ENCODE measurements at regions of chr10 and their contacts with region 1.

Region 1: DNA sequence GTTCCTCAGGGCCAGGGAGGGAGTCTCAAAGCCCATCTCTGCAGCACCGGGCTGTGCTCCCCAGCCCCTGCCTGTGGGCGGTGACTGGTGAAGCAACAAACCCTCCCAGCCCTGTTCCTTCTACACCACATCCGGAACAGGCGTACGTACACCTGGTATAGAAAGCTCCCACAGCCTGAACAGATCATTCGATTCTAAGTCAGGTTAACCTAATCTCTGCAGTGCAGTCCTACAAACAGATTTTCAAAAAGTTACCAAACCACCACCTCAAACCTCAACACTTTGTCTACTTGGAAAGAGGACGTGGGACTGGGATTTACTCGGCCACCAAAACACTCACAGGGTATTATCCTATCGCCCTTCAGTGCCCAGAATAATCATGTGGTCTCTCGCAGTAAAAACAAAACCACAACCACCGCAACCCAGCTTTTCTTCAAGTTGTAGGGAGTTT is 238.4 kb downstream of the DIP2C start:
- DNase-seq: peak; percentile 46 to 90 (median 65)
- ATAC-seq: peak; percentile 98
- H3K4me3 ChIP-seq: peak overlapping the region; percentile 22
- H3K4me3 Mint-ChIP-seq: peak overlapping the region; percentile 84
- H3K27ac ChIP-seq: peak overlapping the region in 1 of 2 donors; percentile 2
- H3K27ac Mint-ChIP-seq: peak overlapping the region; percentile 93
- H3K4me1 ChIP-seq: peaks cover 67% of the 10 kb centered on the region
- H3K4me1 Mint-ChIP-seq: peaks cover 65% of the 10 kb centered on the region
- H3K27me3 ChIP-seq: no peaks in the 10 kb centered on the region
- H3K27me3 Mint-ChIP-seq: no peaks in the 10 kb centered on the region
- CTCF ChIP-seq: no peak

Region 2: GRCh38 chr10:436911-437665 is 14.0 kb before region 1 on chr10:
- CTCF ChIA-PET with region 1: no interaction called
- POLR2A ChIA-PET with region 1: interaction called, 16 read pairs
- intact Hi-C with region 1: loop called in 1 of 2 experiments (anchors 2 kb)
- DNase-seq: peak in 4 of 14 experiments; percentile 17 to 60 (median 31)
- ATAC-seq: peak; percentile 34
- H3K4me3 ChIP-seq: no peak overlapping the region
- H3K4me3 Mint-ChIP-seq: peak overlapping the region; percentile 2
- H3K27ac ChIP-seq: no peak overlapping the region
- H3K27ac Mint-ChIP-seq: peak overlapping the region; percentile 37
- H3K4me1 ChIP-seq: peaks cover 39% of the 10 kb centered on the region
- H3K4me1 Mint-ChIP-seq: peaks cover 46% of the 10 kb centered on the region
- H3K27me3 ChIP-seq: no peaks in the 10 kb centered on the region
- H3K27me3 Mint-ChIP-seq: no peaks in the 10 kb centered on the region
- CTCF ChIP-seq: no peak

Region 3: DNA sequence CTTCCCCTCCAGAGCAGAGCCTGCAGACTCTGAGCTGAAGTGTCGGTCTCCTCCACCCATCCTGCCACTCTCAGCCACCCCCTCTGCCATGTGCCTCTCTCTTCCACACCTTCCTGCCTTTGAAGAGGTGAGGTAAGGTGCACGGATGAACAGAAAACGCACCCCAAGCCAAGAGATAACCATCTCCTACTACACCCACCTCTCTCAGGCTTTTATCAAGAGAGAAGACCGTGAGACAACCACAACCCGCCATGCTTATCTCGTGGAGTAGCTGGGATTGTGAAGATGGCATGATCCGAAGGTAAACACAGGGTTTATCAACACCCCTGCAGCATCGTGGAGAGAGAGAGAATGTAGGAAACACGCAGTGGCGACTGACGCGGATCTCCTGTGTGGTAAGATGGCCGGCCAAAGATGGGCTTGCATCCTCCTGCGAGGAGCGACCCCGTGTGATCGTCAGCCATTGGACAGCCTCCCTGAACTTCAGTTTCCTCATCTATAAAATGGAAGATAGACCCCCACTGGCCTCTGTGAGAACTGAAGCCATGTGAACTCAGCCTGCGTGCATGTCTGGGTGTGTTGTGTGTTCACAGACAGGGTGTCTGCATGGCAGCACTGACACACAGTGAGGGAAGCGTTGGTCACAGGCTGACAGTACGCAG is 19.4 kb after region 1 on chr10:
- CTCF ChIA-PET with region 1: no interaction called
- POLR2A ChIA-PET with region 1: interaction called, 33 read pairs
- intact Hi-C with region 1: loop called in 1 of 2 experiments (anchors 1 kb)
- DNase-seq: peak; percentile 24 to 84 (median 44)
- ATAC-seq: peak; percentile 79
- H3K4me3 ChIP-seq: peak overlapping the region; percentile 35
- H3K4me3 Mint-ChIP-seq: peak overlapping the region; percentile 72
- H3K27ac ChIP-seq: peak overlapping the region; percentile 26 to 40
- H3K27ac Mint-ChIP-seq: peak overlapping the region; percentile 92
- H3K4me1 ChIP-seq: peaks cover 37% of the 10 kb centered on the region
- H3K4me1 Mint-ChIP-seq: peaks cover 25% of the 10 kb centered on the region
- H3K27me3 ChIP-seq: no peaks in the 10 kb centered on the region
- H3K27me3 Mint-ChIP-seq: no peaks in the 10 kb centered on the region
- CTCF ChIP-seq: peak; percentile 45